ENCODE measurements at regions of chr15 and their contacts with region 1.

Region 1: DNA sequence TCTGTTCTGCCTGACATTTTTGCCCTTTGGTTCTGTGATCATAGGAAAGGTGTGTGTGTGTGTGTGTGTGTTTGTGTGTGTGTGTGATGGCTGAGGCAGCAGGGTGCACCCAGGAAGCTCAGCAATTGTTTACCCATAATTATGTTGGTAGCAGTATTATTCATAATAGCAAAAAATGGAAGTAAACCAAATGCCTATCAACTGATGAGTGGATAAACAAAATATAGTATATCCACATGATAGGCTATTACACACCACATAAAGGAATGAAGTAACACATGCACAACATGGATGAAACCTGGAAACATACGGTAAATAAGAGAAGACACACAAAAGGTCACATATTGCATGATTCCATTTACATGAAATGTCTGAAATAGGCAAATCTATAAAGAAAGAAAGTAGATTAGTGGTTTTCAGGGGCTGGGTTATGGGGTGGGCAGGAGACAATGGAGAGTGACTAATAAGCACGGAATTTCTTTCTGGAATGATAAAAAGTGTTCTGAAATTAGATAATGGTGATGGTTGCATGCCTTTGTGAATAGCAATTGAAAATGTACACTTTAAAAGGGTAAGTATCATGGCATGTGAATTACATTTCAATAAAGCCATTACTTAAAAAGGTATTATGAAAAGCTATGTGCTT is 167.2 kb downstream of the POLR2M start:
- DNase-seq: peak; percentile 69
- ATAC-seq: peak; percentile 79
- H3K4me3 ChIP-seq: no peak overlapping the region
- H3K27ac ChIP-seq: 0 out of 2 replicates have a peak overlapping the region, but pooled peaks have one; percentile 20
- H3K4me1 ChIP-seq: peaks cover 32% of the 10 kb centered on the region
- H3K27me3 ChIP-seq: no peaks in the 10 kb centered on the region
- CTCF ChIP-seq: no peak

Region 2: DNA sequence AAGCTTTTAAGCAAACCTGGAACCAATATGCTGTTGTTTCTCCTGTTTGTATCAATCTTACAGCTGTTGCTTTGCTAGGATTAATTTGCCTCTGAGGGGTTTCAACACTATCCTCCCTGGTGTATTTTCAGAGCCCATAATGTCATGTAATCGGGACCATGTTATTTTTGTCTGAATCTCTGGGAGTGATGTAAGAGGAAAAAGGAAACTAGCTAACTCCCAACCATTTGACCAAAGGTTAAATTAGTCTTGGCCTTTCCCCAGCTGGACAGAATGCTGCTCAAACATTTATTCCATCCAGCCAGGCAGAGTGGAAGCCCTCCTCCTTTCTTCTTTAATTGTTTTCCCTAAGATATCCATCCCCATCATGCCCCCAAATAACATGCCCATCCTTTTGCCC is 49.6 kb after region 1 on chr15:
- CTCF ChIA-PET with region 1: no interaction called
- POLR2A ChIA-PET with region 1: no interaction called
- intact Hi-C with region 1: loop called (anchors 5 kb)
- DNase-seq: no peak
- ATAC-seq: no peak
- H3K4me3 ChIP-seq: no peak overlapping the region
- H3K27ac ChIP-seq: no peak overlapping the region
- H3K4me1 ChIP-seq: peaks cover 17% of the 10 kb centered on the region
- H3K27me3 ChIP-seq: no peaks in the 10 kb centered on the region
- CTCF ChIP-seq: no peak